ENCODE measurements at regions of chr22 and their contacts with region 1.

Region 1: GRCh38 chr22:49867303-49868265 is 13.9 kb downstream of the ZBED4 start:
- DNase-seq: peak in 3 of 42 donors; percentile 0 to 22 (median 1)

Region 2: GRCh38 chr22:49906071-49906932 is 38.7 kb after region 1 on chr22:
- intact Hi-C with region 1: loop called (anchors 5 kb)
- DNase-seq: no peak

Region 3: GRCh38 chr22:50058906-50059880 is 191.6 kb after region 1 on chr22:
- intact Hi-C with region 1: no loop called
- DNase-seq: peak in 2 of 42 donors; percentile 8 to 10